ENCODE measurements at regions of chr1 and their contacts with region 1.

Region 1: DNA sequence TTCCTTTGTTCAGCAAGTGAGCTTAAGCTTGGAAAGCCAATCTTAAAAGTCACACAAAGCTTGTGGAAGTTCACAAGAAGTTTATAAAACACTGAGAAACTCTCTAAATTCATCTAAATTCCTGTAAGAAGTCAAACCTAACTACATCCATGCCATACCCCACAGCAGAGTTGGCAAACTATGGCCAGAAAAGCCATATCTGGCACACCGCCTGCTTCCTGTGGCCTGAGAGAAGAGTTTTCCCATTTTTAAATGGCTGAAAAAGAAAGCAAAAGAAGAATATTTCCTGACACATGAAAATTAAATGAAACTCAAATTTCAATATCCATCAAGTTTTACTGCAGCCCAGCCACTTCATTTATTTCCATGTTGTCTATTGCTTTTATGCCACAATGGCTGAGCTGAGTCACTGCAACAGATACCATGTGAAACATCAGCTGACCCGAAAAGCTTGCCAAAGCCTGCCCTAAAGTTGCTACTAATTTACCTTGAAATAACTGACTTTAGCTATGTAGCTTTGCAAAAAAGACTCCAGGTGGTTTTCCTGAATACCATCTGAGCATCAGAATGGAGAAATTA is 237.1 kb downstream of the SLC45A1 start:
- DNase-seq: peak; percentile 53
- H3K4me3 ChIP-seq: no peak overlapping the region
- H3K27ac ChIP-seq: no peak overlapping the region
- H3K4me1 ChIP-seq: peaks cover 3% of the 10 kb centered on the region
- H3K27me3 ChIP-seq: no peaks in the 10 kb centered on the region
- CTCF ChIP-seq: no peak
- POLR2A ChIP-seq: no peak

Region 2: DNA sequence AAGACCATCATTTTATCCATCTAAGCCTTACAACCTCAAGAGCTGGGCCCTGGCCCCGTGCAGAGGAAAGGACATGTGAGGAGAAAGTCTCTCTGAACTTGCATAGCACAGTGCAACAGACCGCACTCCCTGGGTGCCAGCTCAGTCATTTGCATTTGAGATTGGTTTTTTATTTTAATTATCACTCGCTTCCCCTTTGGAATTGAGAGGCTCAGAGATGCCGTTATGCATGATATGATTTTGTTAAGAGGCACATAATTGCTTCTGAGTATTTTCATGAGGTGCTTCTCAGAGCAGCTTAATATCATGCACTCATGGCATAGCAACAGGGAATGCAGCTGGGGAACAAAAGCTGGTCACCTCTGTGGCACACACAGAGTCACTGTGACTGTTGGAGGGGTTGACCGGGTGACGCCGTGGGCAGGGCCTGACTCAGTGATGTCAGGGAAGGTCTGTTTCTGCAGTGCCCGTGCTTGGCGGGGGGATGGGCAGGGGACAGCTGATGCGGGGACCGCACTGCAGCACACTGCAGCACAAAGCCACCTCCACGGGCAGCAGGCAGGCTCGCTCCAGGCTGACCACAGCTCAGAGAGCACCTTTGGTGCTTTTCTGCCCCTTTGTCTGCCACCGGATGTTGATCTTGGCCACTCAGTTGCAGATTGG is 827.1 kb before region 1 on chr1:
- CTCF ChIA-PET with region 1: no interaction called
- POLR2A ChIA-PET with region 1: no interaction called
- dilution Hi-C with region 1: no loop called
- intact Hi-C with region 1: no loop called
- DNase-seq: no peak
- H3K4me3 ChIP-seq: no peak overlapping the region
- H3K27ac ChIP-seq: no peak overlapping the region
- H3K4me1 ChIP-seq: peaks cover 8% of the 10 kb centered on the region
- H3K27me3 ChIP-seq: no peaks in the 10 kb centered on the region
- CTCF ChIP-seq: no peak
- POLR2A ChIP-seq: no peak

Region 3: DNA sequence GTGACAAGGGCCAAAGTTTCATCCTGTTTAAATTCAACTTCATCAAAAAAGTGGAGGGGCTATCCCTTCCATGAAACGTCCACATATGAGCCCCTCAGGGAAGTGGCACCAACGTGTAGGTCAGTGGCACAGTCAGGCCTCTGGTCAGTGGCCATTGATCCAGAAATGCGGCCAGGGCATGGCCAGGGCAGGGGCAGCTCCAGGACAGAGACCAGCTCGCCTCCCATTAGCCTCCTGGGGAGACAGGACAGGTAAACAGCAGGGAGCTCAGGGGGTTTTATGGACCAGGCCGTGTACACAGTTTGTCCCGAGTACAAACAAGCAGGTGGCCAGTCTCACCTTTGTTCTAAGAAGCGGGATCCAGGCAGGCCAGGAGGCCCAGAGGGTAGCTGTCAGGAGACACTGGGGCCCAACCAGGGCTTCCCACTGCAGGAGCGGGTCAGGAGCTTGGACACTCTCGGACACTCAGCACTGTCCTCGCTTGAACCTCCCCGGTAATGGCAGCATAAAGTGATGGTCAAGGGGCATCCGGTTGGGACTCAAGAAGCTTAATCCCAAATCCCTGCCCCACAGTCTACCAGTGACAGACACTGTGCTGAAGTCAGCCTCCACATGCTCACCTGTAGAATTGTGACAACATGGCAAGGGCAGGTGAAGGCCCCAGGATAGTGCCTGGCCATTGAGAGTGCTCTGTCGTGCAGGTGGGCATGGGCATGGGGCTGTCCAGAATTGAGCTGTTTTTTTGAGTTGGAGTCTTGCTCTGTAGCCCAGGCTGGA is 384.8 kb before region 1 on chr1:
- CTCF ChIA-PET with region 1: no interaction called
- POLR2A ChIA-PET with region 1: no interaction called
- dilution Hi-C with region 1: no loop called
- intact Hi-C with region 1: no loop called
- DNase-seq: no peak
- H3K4me3 ChIP-seq: no peak overlapping the region
- H3K27ac ChIP-seq: no peak overlapping the region
- H3K4me1 ChIP-seq: peaks cover 10% of the 10 kb centered on the region
- H3K27me3 ChIP-seq: no peaks in the 10 kb centered on the region
- CTCF ChIP-seq: no peak
- POLR2A ChIP-seq: no peak

Region 4: DNA sequence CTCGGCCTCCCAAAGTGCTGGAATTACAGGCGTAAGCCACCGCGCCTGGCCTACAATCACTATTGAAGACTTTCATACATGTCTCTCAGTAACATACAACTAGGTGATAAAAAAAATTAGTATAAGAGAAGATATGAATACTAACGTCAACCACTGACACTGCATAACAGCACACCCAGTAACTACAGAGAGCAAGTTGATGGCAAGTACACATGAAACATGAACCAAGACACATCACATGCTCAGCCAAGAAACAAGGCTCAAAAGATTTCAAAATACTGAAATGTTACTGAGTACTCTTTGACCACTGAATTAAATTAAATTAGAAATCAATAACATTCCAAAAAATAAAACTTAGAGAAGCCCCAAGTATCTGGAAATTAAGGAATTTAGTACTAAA is 69.0 kb before region 1 on chr1:
- CTCF ChIA-PET with region 1: no interaction called
- POLR2A ChIA-PET with region 1: no interaction called
- dilution Hi-C with region 1: no loop called
- intact Hi-C with region 1: loop called (anchors 5 kb)
- DNase-seq: no peak
- H3K4me3 ChIP-seq: no peak overlapping the region
- H3K27ac ChIP-seq: no peak overlapping the region
- H3K4me1 ChIP-seq: no peaks in the 10 kb centered on the region
- H3K27me3 ChIP-seq: no peaks in the 10 kb centered on the region
- CTCF ChIP-seq: no peak
- POLR2A ChIP-seq: no peak

Measured in endothelial cell of umbilical vein (primary cell).